Dorsolateral prefrontal cortex (tissue), 120 donors: ENCODE measurements at regions of chr7 and their contacts with region 1.

Region 1: GRCh38 chr7:44986218-44987053 is 7.6 kb upstream of the MYO1G start:
- DNase-seq: peak; percentile 79 to 96 (median 90)
- H3K4me3 ChIP-seq: peak overlapping the region; percentile 49 to 95 (median 74)
- H3K27ac ChIP-seq: peak overlapping the region; percentile 63 to 97 (median 93)
- H3K27me3 ChIP-seq: no peaks in the 10 kb centered on the region
- CTCF ChIP-seq: peak in 11 of 56 donors; percentile 1 to 23 (median 10)

Region 2: DNA sequence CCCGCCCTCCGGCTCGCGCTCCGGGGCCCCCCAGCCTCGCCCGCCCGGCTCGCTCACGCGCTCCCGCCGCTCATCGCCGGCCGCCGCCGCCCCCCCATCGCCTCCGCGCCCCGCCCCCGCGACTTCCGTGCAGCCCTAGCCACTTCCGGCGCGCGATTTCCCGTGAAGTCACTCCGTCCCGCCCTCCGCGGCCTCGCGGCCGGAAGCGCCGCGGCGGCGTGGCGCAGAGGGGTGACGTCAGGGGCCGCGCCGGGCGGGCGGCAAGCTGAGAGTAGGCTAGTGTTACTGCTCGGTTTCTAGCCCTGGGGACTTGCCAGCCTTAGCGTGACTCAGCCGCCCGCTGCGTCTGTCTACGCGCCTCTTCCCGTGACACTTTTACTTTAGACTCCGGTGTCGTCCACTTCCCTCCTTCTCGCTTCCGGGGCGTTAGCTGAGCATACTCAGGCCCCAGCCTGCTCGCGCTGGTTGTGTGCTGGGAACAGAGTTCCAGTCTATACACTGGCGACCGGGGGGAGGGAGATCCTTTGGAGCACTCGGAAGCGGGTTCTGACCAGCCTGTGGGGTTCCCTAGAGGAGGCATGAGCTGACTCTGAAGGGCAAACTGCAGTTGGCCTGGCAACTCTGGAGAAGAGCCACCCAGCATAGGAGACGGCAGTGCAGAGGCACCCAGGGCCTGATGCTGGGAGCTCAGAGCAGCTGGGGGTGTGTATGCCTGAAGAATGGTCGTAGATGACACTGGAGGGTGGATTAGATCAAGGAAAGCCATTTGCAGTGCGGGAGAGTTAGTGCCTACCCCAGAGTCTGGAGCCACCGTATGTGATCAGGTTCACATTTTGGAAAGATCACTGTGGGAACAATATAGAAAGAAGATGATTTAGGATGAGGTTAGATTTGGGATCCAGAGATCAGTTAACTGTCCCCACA is 100.8 kb before region 1 on chr7 and contains the start of gene PURB:
- intact Hi-C with region 1: loop called in 1 of 2 experiments (anchors 10 kb)
- DNase-seq: peak; percentile 88 to 97 (median 94)
- H3K4me3 ChIP-seq: peak within 1 kb of the TSS; percentile 70 to 100 (median 94)
- H3K27ac ChIP-seq: peak within 1 kb of the TSS; percentile 82 to 99 (median 97)
- H3K27me3 ChIP-seq: no peaks in the 10 kb centered on the region
- CTCF ChIP-seq: peak in 11 of 56 donors; percentile 6 to 33 (median 22)
- total RNA-seq, gene PURB: 28.0 to 55.6 (median 40.5) TPM

Region 3: GRCh38 chr7:44944821-44945220 is 41.6 kb before region 1 on chr7:
- intact Hi-C with region 1: no loop called
- DNase-seq: no peak
- H3K4me3 ChIP-seq: no peak overlapping the region
- H3K27ac ChIP-seq: no peak overlapping the region
- H3K27me3 ChIP-seq: no peaks in the 10 kb centered on the region
- CTCF ChIP-seq: no peak